ENCODE measurements at regions of chr10 and their contacts with region 1.

Region 1: DNA sequence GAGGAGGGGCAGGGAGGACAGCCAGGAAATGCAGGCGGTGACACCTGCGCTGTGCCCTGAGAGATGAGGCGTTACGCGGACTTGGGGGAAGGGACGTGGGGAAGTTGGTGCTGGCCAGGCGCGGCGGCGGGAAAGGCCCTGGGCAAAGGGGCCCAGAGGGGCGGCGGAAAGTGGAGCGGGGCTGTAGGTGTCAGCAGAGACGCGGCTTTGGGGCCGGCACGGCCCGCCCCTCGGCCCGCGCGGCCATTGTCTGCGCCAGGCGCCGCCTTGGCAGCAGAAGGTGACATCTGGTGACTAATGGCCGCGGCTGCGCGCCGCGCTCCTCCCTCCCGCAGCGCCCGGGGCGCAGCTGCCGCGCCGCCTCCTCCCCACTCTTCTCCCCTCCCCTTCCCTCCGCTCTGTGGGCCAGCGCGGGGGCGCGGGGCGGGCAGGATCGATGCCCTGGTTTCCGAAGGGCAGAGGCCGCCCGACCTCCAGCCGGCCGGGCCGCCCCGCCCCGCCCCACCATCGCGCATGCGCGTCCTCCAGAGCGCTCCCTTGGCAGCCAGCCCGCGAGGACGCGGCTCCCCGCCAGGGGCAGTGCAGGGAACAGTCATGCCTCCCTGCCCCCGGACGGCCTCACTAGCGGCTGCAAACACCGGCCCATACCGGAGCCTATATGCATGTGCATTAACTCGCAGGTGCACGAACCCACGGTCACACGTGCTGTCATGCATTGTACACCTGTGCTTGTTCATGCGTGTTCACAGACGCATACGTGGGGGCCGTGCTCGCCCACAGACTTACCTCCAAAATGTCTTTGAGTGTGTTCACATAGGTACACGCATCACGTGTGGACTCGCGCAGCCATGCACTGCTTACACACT is 269.6 kb downstream of the RPS24 start:
- DNase-seq: peak; percentile 10
- H3K4me3 ChIP-seq: peak overlapping the region; percentile 68
- CTCF ChIP-seq: peak; percentile 87

Region 2: DNA sequence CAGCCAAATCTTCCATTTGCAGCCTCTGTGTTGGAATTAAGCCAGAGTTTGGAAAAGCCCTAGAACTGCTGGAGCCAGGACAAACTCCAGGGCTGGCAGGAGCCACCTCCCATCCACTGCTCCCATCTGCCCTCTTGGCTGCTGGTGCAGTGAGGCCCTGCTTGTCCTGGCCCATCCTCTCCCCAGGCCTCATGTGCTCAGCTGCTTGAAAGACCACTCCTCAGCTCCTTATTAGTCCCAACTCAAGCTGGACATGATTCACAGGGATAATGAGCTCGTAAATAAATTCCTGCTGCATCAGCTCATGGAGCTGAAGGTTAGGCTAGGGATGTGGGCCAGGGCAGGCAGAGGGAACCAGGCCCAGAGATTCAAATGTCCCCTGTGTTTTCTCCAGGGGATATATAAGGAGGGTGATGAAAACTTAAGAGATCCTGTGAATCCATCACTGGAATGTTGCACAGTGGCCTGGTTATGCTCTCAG is 13.3 kb after region 1 on chr10:
- CTCF ChIA-PET with region 1: interaction called, 25 read pairs
- POLR2A ChIA-PET with region 1: no interaction called
- DNase-seq: no peak
- H3K4me3 ChIP-seq: no peak overlapping the region
- CTCF ChIP-seq: no peak